ENCODE measurements at regions of chr11 and their contacts with region 1.

Region 1: DNA sequence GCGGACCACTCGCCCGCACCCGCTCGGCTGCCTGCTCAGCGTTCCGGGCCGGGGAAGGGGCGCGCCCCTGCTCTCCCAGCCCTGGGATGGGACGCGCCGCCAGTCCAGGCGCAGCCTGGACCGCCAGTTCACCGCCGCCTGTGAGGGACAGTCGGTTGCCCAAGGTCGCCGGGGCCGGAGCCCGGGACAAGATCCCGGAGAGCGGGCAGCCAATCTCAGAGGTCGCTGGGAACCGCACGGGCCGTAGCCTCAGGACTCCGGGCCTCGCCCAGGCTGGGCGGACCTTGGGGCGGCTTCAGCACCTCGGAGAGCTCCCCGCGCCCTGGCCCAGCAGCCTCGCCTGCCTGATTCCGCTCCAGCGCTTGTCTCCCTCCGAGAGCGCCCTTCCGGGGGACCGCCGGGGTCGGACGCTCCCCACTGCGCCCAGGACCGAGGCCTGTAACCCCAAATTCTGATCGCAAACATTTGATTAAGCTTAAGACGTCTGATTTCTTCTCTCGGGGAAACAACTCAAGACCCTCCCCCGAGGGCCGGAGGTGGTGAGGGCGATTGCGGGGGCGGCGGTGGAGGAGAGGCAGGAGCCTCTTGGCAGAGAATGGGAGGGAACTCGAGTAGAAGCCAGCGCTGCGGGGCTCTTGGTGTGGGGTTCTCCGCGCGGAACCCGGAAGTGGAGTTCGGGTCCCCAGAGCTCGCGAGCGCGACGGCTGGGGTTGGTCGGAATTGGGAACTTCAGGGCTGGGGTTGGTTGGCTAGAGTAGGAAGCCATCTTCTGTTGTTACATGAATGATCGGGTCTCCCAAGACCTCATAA is 1.1 kb upstream of the CHRM4 start:
- DNase-seq: peak; percentile 92
- ATAC-seq: peak; percentile 66
- H3K4me3 Mint-ChIP-seq: peak overlapping the region; percentile 84
- H3K27ac Mint-ChIP-seq: no peak overlapping the region
- H3K4me1 Mint-ChIP-seq: peaks cover 25% of the 10 kb centered on the region
- H3K27me3 Mint-ChIP-seq: peaks cover 49% of the 10 kb centered on the region
- CTCF ChIP-seq: no peak

Region 2: DNA sequence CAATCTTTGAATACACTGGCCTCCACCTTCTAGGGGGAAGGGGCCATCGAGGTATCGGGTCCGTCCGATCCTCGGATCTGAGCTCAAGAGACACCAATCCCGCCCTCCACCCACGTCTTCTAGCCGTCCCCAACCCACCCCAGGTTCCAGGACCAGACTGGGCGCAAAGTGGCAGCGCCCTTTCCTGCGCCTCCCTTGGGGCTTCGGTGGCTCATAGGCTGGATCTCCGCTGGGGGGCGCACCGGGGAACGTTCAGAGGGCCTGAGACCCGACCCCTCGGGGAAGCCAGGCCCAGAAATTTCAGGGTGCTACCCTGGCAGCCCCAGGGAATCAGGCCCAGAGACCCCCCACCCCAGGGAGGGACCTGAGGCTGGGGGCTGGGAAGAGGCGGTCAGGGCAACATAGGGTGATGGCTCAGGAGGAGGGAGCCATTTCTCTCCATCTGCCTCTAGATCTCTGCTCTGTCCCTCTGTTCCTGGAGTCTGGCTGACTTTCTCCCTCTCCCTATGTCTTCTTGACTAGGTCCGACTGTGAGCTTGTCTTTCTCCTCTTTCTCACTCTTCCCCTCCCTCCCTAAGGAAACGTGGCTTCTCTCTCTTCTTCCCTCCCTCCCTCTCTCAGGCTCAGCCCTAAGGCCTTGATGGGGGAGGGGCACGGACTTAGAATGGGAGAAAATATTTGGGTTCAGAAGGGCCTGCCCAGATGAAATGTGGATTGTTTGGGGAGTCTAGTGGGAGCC is 114.1 kb before region 1 on chr11:
- CTCF ChIA-PET with region 1: interaction called, 12 read pairs
- POLR2A ChIA-PET with region 1: no interaction called
- DNase-seq: peak; percentile 83
- ATAC-seq: peak; percentile 68
- H3K4me3 Mint-ChIP-seq: peak overlapping the region; percentile 79
- H3K27ac Mint-ChIP-seq: peak overlapping the region; percentile 26
- H3K4me1 Mint-ChIP-seq: peaks cover 41% of the 10 kb centered on the region
- H3K27me3 Mint-ChIP-seq: peaks cover 10% of the 10 kb centered on the region
- CTCF ChIP-seq: peak; percentile 53

Region 3: GRCh38 chr11:46346886-46347636 is 45.6 kb before region 1 on chr11 and contains the start of gene DGKZ:
- CTCF ChIA-PET with region 1: interaction called, 46 read pairs
- POLR2A ChIA-PET with region 1: interaction called, 3 read pairs
- DNase-seq: peak; percentile 81
- ATAC-seq: peak; percentile 77
- H3K4me3 Mint-ChIP-seq: peak within 1 kb of the TSS; percentile 77
- H3K27ac Mint-ChIP-seq: no peak within 1 kb of the TSS; the same call in 1 of the 2 replicates
- H3K4me1 Mint-ChIP-seq: peaks cover 86% of the 10 kb centered on the region
- H3K27me3 Mint-ChIP-seq: peaks cover 11% of the 10 kb centered on the region
- CTCF ChIP-seq: peak; percentile 80
- total RNA-seq, gene DGKZ: 107 to 139 TPM (median 115 TPM) in 3 replicates

Region 4: DNA sequence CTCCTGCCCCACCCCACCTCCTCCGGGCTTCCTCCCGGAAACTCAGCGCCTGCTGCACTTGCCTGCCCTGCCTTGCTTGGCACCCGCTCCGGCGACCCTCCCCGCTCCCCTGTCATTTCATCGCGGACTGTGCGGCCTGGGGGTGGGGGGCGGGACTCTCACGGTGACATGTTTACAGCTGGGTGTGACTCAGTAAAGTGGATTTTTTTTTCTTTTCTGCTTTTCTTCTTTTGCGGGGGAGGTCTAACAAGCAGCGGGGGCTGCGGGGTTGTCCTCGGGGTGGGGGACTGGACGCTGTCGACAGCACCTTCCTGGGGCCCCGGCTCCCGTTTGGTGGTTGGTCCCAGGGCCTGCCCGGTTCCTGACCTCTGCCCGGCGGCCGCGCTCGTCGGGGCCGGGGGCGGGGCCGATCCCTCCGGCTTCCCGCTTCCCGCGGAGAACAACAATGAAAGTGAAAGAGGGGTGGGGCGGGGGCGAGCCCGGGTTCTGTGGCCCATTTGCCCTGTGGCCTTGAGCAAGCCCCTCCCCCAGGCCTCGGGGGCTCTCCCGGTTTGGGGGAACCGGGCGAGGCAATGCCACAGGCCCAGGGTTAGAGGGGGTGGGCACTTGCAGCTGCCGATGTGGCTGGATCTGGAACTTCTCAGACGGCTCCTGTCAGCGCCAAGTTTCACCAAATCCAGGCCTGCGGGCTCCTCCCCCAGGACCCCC is 12.1 kb before region 1 on chr11:
- CTCF ChIA-PET with region 1: interaction called, 65 read pairs
- POLR2A ChIA-PET with region 1: interaction called, 6 read pairs
- DNase-seq: peak; percentile 91
- ATAC-seq: peak; percentile 38
- H3K4me3 Mint-ChIP-seq: peak overlapping the region; percentile 69
- H3K27ac Mint-ChIP-seq: peak overlapping the region; percentile 76
- H3K4me1 Mint-ChIP-seq: peaks cover 21% of the 10 kb centered on the region
- H3K27me3 Mint-ChIP-seq: no peaks in the 10 kb centered on the region
- CTCF ChIP-seq: no peak

Region 5: DNA sequence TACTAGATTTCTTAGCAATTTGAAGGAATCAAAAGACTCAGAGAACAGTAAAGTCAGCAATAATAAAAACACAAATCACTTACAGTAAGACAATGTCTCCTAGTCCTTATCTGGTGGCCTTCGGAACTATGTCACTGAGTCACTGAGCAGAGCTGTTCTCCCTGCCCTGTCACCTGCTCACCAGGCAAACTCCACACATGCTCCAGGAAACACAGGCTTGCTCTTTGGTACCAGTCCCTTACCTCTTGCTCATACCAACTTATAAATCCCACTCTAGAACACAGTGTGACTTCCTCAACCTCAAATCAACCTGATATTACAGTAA is 80.0 kb after region 1 on chr11:
- CTCF ChIA-PET with region 1: no interaction called
- POLR2A ChIA-PET with region 1: no interaction called
- DNase-seq: no peak
- ATAC-seq: no peak
- H3K4me3 Mint-ChIP-seq: no peak overlapping the region
- H3K27ac Mint-ChIP-seq: peak overlapping the region; percentile 1; the same call in 1 of the 2 replicates
- H3K4me1 Mint-ChIP-seq: no peaks in the 10 kb centered on the region
- H3K27me3 Mint-ChIP-seq: no peaks in the 10 kb centered on the region
- CTCF ChIP-seq: no peak

Region 6: GRCh38 chr11:46489661-46490560 is 97.3 kb after region 1 on chr11:
- CTCF ChIA-PET with region 1: interaction called, 12 read pairs
- POLR2A ChIA-PET with region 1: no interaction called
- DNase-seq: peak; percentile 43
- ATAC-seq: peak; percentile 90
- H3K4me3 Mint-ChIP-seq: no peak overlapping the region
- H3K27ac Mint-ChIP-seq: no peak overlapping the region; the same call in 1 of the 2 replicates
- H3K4me1 Mint-ChIP-seq: peaks cover 7% of the 10 kb centered on the region
- H3K27me3 Mint-ChIP-seq: no peaks in the 10 kb centered on the region
- CTCF ChIP-seq: peak; percentile 41; the same call in 1 of the 2 replicates

Measured in WTC11 (cell line).